AG04450 (cell line): ENCODE measurements at regions of chr3 and their contacts with region 1.

Region 1: DNA sequence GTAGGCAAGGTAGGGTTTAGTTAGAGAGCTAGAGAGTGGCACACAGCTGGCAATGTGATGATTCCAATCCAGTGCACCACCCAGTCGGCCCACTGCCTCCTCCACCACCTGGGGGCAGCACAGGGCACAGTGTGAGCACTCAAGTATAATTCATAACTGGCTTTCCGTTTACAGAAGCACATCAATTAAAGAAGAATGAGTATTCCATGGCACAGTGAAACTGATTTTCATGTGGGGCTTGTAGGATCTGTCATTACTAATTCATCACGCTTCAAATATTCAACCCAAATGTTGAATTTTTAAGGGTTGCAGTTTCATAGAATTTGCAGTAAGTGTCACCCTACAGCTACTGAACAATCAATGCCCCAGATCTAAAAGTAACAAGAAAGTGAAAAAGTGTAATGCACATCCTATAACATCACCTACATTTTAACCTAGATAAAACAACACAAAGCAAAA is 149.9 kb downstream of the IGSF11 start:
- DNase-seq: no peak
- H3K4me3 ChIP-seq: no peak overlapping the region
- H3K27ac ChIP-seq: no peak overlapping the region
- H3K27me3 ChIP-seq: no peaks in the 10 kb centered on the region
- CTCF ChIP-seq: peak; percentile 84

Region 2: GRCh38 chr3:118907909-118908308 is 23.1 kb after region 1 on chr3:
- CTCF ChIA-PET with region 1: interaction called, 13 read pairs
- POLR2A ChIA-PET with region 1: no interaction called
- DNase-seq: no peak
- H3K4me3 ChIP-seq: no peak overlapping the region
- H3K27ac ChIP-seq: no peak overlapping the region
- H3K27me3 ChIP-seq: no peaks in the 10 kb centered on the region
- CTCF ChIP-seq: no peak

Region 3: GRCh38 chr3:119034256-119035013 is 149.7 kb after region 1 on chr3 and contains the start of gene IGSF11:
- CTCF ChIA-PET with region 1: interaction called, 76 read pairs
- POLR2A ChIA-PET with region 1: no interaction called
- DNase-seq: no peak
- H3K4me3 ChIP-seq: peak within 1 kb of the TSS; percentile 61
- H3K27ac ChIP-seq: no peak within 1 kb of the TSS
- H3K27me3 ChIP-seq: peaks cover 14% of the 10 kb centered on the region
- CTCF ChIP-seq: peak; percentile 30; the same call in 1 of the 2 replicates
- polyA plus RNA-seq, gene IGSF11: 0.05 TPM in 1 of 2 replicates, not detected in the other

Region 4: GRCh38 chr3:119098619-119099222 is 213.9 kb after region 1 on chr3:
- CTCF ChIA-PET with region 1: interaction called, 316 read pairs
- POLR2A ChIA-PET with region 1: interaction called, 3 read pairs
- DNase-seq: peak; percentile 3
- H3K4me3 ChIP-seq: no peak overlapping the region
- H3K27ac ChIP-seq: no peak overlapping the region
- H3K27me3 ChIP-seq: no peaks in the 10 kb centered on the region
- CTCF ChIP-seq: peak; percentile 71

Region 5: GRCh38 chr3:119104031-119104430 is 219.3 kb after region 1 on chr3:
- CTCF ChIA-PET with region 1: interaction called, 316 read pairs
- POLR2A ChIA-PET with region 1: no interaction called
- DNase-seq: no peak
- H3K4me3 ChIP-seq: no peak overlapping the region
- H3K27ac ChIP-seq: no peak overlapping the region
- H3K27me3 ChIP-seq: no peaks in the 10 kb centered on the region
- CTCF ChIP-seq: no peak

Region 6: DNA sequence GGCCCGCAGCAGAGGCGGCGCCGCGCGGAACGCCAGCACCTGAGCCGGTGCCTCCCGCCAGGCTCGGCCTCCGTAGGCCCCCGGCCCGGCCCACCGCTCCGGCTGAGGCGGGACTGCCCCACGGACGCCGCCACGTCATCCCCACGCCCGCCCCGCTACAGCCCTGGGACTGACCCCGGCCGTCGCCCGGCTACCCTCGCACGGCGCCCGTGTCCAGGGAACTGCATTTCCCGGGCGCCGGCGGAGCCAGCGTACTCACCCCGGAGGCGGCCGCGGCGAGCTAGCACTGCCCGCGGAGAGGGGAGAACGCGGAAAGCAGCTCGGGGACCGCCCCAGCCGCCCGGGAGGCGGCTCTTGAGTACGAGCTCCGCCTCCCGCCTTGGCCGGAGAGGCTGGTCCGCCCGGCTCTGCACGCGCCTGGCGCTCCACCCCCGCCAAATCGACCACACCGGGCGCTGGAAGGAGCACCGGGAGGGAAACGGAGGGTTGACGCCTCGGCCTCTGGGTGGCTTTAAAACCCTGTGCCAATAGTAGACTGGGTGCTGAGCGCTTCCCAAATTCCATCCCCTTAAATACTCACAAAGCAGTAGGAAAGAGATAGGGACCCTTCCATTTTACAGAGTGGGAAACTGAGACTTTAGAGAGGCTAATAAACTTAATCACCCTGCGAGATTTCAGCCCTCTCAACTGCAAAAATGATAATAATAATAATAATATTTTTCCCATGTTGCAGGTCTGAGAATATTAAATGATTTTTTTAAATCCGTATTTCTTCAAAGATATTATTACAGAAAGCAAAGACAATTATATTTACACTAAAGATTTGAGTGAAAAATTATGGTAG is 356.0 kb after region 1 on chr3 and contains the start of gene B4GALT4:
- CTCF ChIA-PET with region 1: interaction called, 29 read pairs
- POLR2A ChIA-PET with region 1: no interaction called
- DNase-seq: peak; percentile 59
- H3K4me3 ChIP-seq: peak within 1 kb of the TSS; percentile 84
- H3K27ac ChIP-seq: peak within 1 kb of the TSS; percentile 47
- H3K27me3 ChIP-seq: no peaks in the 10 kb centered on the region
- CTCF ChIP-seq: no peak
- polyA plus RNA-seq, gene B4GALT4: 24.6 and 32.6 TPM in 2 replicates

Region 7: GRCh38 chr3:119681279-119681678 is 796.5 kb after region 1 on chr3:
- CTCF ChIA-PET with region 1: interaction called, 24 read pairs
- POLR2A ChIA-PET with region 1: no interaction called
- DNase-seq: no peak
- H3K4me3 ChIP-seq: no peak overlapping the region
- H3K27ac ChIP-seq: no peak overlapping the region
- H3K27me3 ChIP-seq: peaks cover 8% of the 10 kb centered on the region
- CTCF ChIP-seq: peak; percentile 57